Activated CD4-positive, alpha-beta T cell treated with anti-CD3 and anti-CD28 coated beads for 36 hours (primary cell): ENCODE measurements at regions of chr20 and their contacts with region 1.

Region 1: DNA sequence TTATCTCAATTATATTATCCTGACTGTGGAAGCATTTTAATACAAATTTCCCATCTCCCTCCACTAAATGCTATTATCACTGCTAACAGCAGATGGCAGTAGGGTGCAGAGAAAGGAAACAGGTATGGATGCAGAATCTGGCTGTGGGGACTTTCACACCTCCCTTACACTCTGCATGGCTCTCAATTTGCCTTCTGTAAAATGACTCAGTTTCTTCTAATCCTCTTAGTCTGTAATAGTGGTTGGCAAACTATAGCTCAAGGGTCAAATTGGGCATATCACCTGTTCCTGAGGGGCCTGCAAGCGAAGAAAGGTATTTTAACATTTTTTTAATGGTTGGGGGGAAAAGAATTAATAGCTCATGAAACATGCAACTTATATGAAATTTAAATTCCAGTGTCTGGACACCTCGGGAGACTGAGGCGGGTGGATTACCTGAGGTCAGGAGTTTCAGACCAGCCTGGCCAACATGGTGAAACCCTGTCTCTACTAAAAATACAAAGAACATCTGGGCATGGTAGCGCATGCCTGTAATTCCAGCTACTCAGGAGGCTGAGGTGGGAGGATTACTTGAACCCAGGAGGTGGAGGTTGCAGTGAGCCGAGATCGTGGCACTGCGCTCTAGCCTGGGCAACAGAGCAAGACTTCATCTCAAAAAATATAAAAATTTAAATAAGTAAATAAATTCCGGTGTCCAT is 83.5 kb downstream of the ZMYND8 start:
- DNase-seq: peak; percentile 64
- ATAC-seq: peak; percentile 69
- H3K4me3 Mint-ChIP-seq: no peak overlapping the region
- H3K27ac Mint-ChIP-seq: peak overlapping the region; percentile 88
- H3K4me1 Mint-ChIP-seq: peaks cover 44% of the 10 kb centered on the region
- H3K27me3 Mint-ChIP-seq: no peaks in the 10 kb centered on the region

Region 2: DNA sequence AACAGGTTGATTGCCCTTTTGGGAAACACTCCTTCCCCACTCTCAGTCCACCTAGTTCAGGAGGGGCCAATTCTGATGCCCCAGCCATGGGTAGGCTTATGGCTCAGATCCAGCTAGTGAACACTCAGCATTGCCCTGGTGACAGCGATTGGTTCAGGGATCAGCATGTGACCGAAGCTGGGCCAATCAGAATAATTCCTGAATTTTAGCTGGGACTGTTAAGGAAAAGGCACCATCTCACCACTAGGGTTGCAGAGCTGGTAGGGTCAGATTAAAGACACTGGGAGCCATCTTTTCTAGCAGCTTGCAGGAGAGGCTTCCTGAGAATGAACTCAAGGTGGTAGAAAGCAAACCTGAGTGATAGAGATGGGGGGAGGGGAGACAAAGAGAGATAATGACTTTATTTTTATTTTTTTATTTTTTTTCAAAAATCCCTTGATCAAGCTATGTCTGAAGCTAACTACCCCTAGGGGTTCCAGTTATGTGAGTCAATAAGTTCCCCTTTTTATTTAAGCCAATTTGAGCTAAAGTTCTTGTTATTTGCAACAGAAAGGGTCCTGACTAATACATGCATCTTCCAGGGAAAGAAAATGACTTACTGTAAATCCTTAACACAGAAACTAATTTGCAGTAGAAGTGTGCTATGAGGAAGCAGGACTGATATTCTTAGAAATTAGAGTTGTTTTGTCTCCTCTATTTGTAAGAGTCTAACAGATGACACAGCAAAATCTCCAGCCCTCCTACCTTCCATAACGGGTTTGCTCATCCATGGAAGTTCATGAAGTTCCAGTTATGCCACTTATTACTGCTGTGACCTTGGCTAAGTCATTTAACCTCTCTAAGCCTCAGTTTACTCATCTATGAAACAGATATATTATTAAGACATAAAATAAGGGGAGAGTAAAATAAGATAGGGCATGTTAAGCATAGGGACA is 333.7 kb before region 1 on chr20:
- CTCF ChIA-PET with region 1: no interaction called
- POLR2A ChIA-PET with region 1: no interaction called
- intact Hi-C with region 1: no loop called
- DNase-seq: peak; percentile 7
- ATAC-seq: peak; percentile 61
- H3K4me3 Mint-ChIP-seq: no peak overlapping the region
- H3K27ac Mint-ChIP-seq: no peak overlapping the region
- H3K4me1 Mint-ChIP-seq: no peaks in the 10 kb centered on the region
- H3K27me3 Mint-ChIP-seq: peaks cover 4% of the 10 kb centered on the region

Region 3: GRCh38 chr20:47196091-47197081 is 76.7 kb before region 1 on chr20:
- CTCF ChIA-PET with region 1: interaction called, 38 read pairs
- POLR2A ChIA-PET with region 1: interaction called, 4 read pairs
- intact Hi-C with region 1: loop called (anchors 1 to 2 kb)
- DNase-seq: peak; percentile 91
- ATAC-seq: peak; percentile 57
- H3K4me3 Mint-ChIP-seq: no peak overlapping the region
- H3K27ac Mint-ChIP-seq: no peak overlapping the region
- H3K4me1 Mint-ChIP-seq: peaks cover 16% of the 10 kb centered on the region
- H3K27me3 Mint-ChIP-seq: peaks cover 8% of the 10 kb centered on the region

Region 4: DNA sequence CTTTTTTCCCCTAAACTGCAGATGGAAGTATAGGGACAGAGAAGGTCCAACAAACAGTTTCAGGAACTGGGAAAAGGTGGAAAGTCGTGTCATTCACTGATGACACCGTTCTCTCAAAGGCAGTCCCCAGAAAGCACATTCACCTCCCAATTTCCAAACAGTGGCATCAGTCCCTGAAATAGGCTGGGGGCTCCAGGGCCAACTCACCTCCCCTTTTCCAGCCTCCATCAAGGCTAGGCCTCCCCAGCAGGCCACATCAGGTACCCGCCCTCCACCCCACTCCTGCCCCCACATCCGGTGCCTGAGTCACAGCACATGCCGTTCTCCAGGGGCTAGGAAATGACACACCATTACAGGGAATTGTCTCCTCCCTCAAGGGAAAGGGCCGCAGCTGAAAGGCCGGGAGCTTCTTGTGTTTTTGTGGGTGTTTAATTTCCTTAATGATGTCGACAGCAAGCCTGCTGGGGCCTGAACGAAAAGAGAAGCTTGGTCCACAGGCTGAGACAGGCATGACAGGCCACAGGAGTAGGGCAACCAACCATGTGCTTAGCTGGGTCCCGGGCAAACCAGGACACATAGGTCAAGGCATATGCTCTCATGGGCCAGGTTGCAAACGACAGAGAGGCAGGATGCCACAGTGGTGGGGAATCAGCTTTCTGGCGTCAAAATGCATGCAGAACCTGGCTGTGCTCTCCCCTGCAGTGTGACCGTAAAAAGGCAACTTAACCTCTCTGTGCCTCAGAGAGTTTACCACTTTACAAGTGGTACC is 44.3 kb after region 1 on chr20:
- CTCF ChIA-PET with region 1: interaction called, 10 read pairs
- POLR2A ChIA-PET with region 1: interaction called, 3 read pairs
- intact Hi-C with region 1: no loop called
- DNase-seq: peak; percentile 81
- ATAC-seq: peak; percentile 84
- H3K4me3 Mint-ChIP-seq: no peak overlapping the region
- H3K27ac Mint-ChIP-seq: peak overlapping the region; percentile 90
- H3K4me1 Mint-ChIP-seq: peaks cover 61% of the 10 kb centered on the region
- H3K27me3 Mint-ChIP-seq: no peaks in the 10 kb centered on the region

Region 5: GRCh38 chr20:47356526-47357295 is 83.7 kb after region 1 on chr20 and contains the start of gene ZMYND8:
- CTCF ChIA-PET with region 1: interaction called, 59 read pairs
- POLR2A ChIA-PET with region 1: interaction called, 4 read pairs
- intact Hi-C with region 1: loop called (anchors 1 kb)
- DNase-seq: peak; percentile 94
- ATAC-seq: peak; percentile 85
- H3K4me3 Mint-ChIP-seq: peak within 1 kb of the TSS; percentile 77
- H3K27ac Mint-ChIP-seq: peak within 1 kb of the TSS; percentile 98
- H3K4me1 Mint-ChIP-seq: peaks cover 54% of the 10 kb centered on the region
- H3K27me3 Mint-ChIP-seq: no peaks in the 10 kb centered on the region
- total RNA-seq, gene ZMYND8: 33.7 to 50.3 TPM

Region 6: DNA sequence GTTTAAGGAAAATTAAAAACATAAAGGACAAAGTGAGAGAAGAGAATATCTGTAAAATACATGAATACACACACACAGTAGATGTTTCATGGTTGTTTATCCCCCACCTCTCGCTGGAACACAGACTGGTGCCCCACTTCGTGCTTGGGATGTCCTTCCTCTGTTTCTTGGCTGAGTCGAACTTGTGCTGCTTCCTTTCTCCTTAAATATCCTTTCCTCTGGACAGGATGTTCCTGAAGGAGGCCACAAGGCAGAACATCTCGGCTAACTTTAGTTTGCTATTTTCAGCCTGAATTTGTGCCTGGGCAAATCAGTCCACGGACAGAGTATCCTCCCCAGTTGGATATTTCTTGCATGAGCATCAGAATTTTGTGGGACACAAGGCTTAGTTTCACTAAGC is 138.1 kb after region 1 on chr20:
- CTCF ChIA-PET with region 1: interaction called, 12 read pairs
- POLR2A ChIA-PET with region 1: interaction called, 3 read pairs
- intact Hi-C with region 1: no loop called
- DNase-seq: no peak
- ATAC-seq: no peak
- H3K4me3 Mint-ChIP-seq: no peak overlapping the region
- H3K27ac Mint-ChIP-seq: no peak overlapping the region
- H3K4me1 Mint-ChIP-seq: peaks cover 26% of the 10 kb centered on the region
- H3K27me3 Mint-ChIP-seq: no peaks in the 10 kb centered on the region

Region 7: DNA sequence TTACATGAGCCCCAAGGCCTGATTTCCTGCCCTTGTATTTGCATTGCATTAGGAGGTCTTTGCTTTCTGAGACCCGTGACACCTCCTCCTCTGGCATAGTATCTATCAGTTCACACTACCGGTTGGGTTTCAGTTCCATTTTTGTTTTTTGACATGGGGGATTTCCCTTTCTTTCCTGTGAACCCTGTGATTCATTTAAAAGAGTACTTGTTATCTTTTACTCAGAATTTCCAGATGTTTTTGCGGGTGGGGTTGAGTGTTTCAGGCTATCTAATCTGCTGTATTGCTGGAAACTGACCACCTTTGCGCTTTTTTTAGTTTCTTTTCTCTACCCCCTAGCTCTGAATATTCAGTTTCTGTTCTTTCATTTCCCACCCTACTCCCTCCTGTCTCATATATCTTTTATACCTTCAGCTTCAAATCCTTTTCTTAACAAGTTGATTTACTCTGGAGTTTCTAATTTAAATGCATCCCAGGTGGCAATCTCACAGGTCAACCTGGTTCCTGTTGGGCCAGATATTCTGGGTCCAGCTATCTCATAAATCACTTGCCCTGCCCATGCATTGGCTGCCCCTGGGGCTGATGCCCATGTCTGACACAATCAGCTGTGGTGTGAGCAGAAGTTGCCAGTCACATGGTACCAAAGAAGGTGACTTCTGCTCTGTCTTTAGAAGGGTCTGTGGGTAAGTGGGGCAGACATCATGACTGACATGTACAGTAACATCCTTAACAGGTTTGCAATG is 214.3 kb after region 1 on chr20:
- CTCF ChIA-PET with region 1: interaction called, 5 read pairs
- POLR2A ChIA-PET with region 1: interaction called, 5 read pairs
- intact Hi-C with region 1: loop called (anchors 1 kb)
- DNase-seq: peak; percentile 78
- ATAC-seq: peak; percentile 88
- H3K4me3 Mint-ChIP-seq: peak overlapping the region; percentile 26
- H3K27ac Mint-ChIP-seq: peak overlapping the region; percentile 99
- H3K4me1 Mint-ChIP-seq: peaks cover 80% of the 10 kb centered on the region
- H3K27me3 Mint-ChIP-seq: no peaks in the 10 kb centered on the region

Region 8: DNA sequence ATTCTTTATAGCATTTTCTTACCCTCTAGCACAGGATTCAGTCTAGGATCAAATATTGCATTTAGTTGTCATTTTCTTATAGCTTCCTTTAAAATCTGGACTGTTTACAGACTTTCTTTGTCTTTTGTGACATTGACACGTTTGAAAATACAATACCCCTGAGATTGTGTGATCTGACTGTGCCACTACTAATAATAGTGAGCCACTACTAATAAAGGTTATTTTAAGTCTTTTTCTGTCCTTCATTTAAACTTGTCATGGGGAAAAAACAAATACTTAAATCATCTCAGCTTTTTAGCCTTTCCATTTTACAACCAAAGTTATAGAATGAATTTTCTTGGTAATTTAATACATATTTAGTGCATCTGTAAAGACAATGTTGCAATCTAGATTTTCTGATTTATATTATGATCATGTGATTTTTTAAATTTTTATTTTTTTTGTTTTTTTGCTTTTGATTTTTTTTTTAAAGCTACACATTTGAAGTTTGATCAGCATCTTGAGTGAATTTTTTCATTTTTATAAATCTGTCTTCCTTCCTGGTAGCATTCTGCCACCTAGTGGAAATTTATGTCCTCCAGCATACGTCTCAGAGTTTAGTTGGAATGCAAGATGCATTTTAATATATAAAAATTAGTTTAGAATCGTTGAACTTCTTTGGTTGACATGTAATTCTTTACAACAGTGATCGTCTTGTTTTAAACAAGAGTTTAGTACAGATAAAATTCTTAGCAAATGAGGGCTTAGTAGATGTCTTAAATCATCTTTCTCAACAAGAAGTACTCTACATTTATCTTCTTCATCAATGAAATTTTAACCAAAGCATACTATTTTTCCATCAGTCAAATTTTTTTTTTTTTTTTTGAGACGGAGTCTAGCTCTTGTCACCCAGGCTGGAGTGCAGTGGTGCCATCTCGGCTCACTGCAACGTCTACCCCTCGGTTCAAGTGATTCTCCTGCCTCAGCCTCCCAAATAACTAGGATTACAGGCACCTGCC is 348.1 kb after region 1 on chr20:
- CTCF ChIA-PET with region 1: interaction called, 58 read pairs
- POLR2A ChIA-PET with region 1: no interaction called
- intact Hi-C with region 1: loop called (anchors 1 kb)
- DNase-seq: no peak
- ATAC-seq: peak; percentile 61
- H3K4me3 Mint-ChIP-seq: no peak overlapping the region
- H3K27ac Mint-ChIP-seq: peak overlapping the region; percentile 79
- H3K4me1 Mint-ChIP-seq: peaks cover 33% of the 10 kb centered on the region
- H3K27me3 Mint-ChIP-seq: no peaks in the 10 kb centered on the region